Heart right ventricle (tissue), 16 donors: ENCODE measurements at regions of chr3 and their contacts with region 1.

Region 1: GRCh38 chr3:142279965-142280590 is 54.7 kb upstream of the GK5 start:
- DNase-seq: peak in 1 of 2 donors; percentile 54
- ATAC-seq: peak; percentile 81 to 95 (median 92)
- H3K4me3 ChIP-seq: no peak overlapping the region
- H3K27ac ChIP-seq: no peak overlapping the region
- H3K4me1 ChIP-seq: peaks cover 0 to 27% (median 0%) of the 10 kb centered on the region in 9 donors
- H3K27me3 ChIP-seq: no peaks in the 10 kb centered on the region
- CTCF ChIP-seq: peak; percentile 34 to 82 (median 73)

Region 2: GRCh38 chr3:141575879-141576743 is 704.0 kb before region 1 on chr3:
- intact Hi-C with region 1: loop called in 1 of 10 experiments (anchors 10 kb)
- DNase-seq: no peak
- ATAC-seq: peak in 4 of 8 donors; percentile 57 to 64 (median 60)
- H3K4me3 ChIP-seq: no peak overlapping the region
- H3K27ac ChIP-seq: peak overlapping the region in 1 of 10 donors; percentile 10
- H3K4me1 ChIP-seq: peaks cover 0 to 6% (median 0%) of the 10 kb centered on the region in 9 donors
- H3K27me3 ChIP-seq: no peaks in the 10 kb centered on the region
- CTCF ChIP-seq: peak in 8 of 9 donors; percentile 23 to 73 (median 60)

Region 3: GRCh38 chr3:141959921-141960554 is 320.0 kb before region 1 on chr3:
- intact Hi-C with region 1: loop called in 9 of 10 experiments (anchors 2 to 10 kb)
- DNase-seq: no peak
- ATAC-seq: peak in 4 of 8 donors; percentile 36 to 61 (median 44)
- H3K4me3 ChIP-seq: no peak overlapping the region
- H3K27ac ChIP-seq: peak overlapping the region in 7 of 10 donors; percentile 8 to 70 (median 43)
- H3K4me1 ChIP-seq: peaks cover 0 to 10% (median 0%) of the 10 kb centered on the region in 9 donors
- H3K27me3 ChIP-seq: no peaks in the 10 kb centered on the region
- CTCF ChIP-seq: no peak

Region 4: DNA sequence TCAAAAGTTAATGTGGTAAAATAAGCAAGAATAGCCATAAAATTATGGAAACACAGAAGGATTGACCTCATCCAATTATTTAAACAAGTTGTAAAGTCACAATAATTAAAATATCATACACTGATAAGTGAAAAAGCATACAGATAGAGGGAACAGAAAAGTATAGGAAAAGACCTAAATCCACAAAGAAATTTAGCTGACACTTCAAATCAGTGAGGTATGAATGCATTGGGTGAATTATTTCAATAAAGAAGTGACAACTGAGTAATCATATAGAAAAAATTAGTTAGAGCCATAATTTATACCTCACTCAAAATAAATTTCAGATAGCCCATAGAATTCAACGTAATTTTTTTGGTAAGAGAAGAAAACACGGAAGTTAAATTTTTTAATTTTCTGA is 155.8 kb before region 1 on chr3:
- intact Hi-C with region 1: loop called (anchors 2 to 10 kb)
- DNase-seq: no peak
- ATAC-seq: no peak
- H3K4me3 ChIP-seq: no peak overlapping the region
- H3K27ac ChIP-seq: no peak overlapping the region
- H3K4me1 ChIP-seq: no peaks in the 10 kb centered on the region
- H3K27me3 ChIP-seq: no peaks in the 10 kb centered on the region
- CTCF ChIP-seq: no peak

Region 5: DNA sequence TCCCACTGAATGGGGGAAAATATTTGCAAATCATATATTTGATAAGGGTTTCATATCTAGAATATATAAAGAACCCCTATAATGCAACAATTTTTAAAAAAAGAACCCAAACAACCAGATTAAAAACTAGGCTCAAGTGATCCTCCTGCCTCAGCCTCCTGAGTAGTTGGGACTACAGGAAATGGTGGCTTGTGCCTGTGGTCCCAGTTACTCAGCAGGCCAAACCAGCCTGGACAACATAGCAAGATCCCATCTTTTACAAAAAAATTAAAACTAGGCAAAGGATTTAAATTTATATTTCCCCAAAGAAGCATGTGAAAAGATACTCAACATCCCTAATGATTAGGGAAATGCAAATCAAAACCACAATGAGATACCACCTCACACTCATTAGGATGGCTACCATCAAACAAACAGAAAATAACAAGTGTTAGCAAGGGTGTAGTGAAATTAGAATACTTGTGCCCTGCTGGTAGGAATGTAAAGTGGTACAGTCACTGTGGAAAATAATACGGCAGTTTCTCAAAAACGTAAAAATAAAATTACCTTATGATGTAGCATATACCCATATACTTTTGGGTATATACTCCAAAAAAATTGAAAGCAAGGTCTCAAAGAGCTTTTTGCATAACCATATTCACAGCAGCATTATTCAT is 150.4 kb before region 1 on chr3:
- intact Hi-C with region 1: loop called (anchors 2 to 10 kb)
- DNase-seq: no peak
- ATAC-seq: no peak
- H3K4me3 ChIP-seq: no peak overlapping the region
- H3K27ac ChIP-seq: no peak overlapping the region
- H3K4me1 ChIP-seq: no peaks in the 10 kb centered on the region
- H3K27me3 ChIP-seq: no peaks in the 10 kb centered on the region
- CTCF ChIP-seq: no peak

Region 6: GRCh38 chr3:142175478-142175877 is 104.6 kb before region 1 on chr3:
- intact Hi-C with region 1: loop called in 7 of 10 experiments (anchors 1 to 10 kb)
- DNase-seq: no peak
- ATAC-seq: no peak
- H3K4me3 ChIP-seq: no peak overlapping the region
- H3K27ac ChIP-seq: no peak overlapping the region
- H3K4me1 ChIP-seq: no peaks in the 10 kb centered on the region
- H3K27me3 ChIP-seq: no peaks in the 10 kb centered on the region
- CTCF ChIP-seq: no peak

Region 7: DNA sequence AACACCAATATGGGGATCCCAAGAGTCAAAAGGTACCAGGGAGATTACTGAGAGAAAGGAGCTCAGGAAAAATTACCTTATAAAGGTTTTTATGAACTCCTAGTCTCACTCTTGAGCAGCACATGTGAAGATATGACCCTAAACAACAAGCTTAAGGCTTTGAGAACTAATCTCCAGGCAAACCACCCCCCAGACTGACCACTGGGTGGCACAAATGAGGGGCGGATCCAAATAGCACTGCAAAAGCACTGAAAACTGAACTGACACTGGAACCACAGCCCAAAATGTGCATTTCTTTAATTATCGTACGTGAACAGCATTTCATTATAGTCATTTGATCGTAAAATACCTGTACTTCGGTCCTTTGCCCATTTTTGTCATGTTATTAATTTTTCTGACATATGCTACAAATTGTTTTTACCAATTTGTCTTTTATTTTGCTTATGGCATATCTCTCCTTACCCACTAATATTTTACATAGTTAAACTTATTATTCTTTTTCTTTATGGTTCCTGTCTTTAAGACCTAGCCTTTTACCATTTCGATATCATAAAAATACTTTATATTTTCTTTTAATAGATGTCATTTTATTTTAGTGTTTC is 99.2 kb before region 1 on chr3:
- intact Hi-C with region 1: loop called in 7 of 10 experiments (anchors 1 to 10 kb)
- DNase-seq: peak; percentile 13 to 15
- ATAC-seq: peak in 1 of 8 donors; percentile 47
- H3K4me3 ChIP-seq: no peak overlapping the region
- H3K27ac ChIP-seq: no peak overlapping the region
- H3K4me1 ChIP-seq: no peaks in the 10 kb centered on the region
- H3K27me3 ChIP-seq: no peaks in the 10 kb centered on the region
- CTCF ChIP-seq: peak in 8 of 9 donors; percentile 10 to 63 (median 52)

Region 8: GRCh38 chr3:142433110-142433509 is 153.0 kb after region 1 on chr3:
- intact Hi-C with region 1: no loop called
- DNase-seq: no peak
- ATAC-seq: no peak
- H3K4me3 ChIP-seq: no peak overlapping the region
- H3K27ac ChIP-seq: peak overlapping the region in 1 of 10 donors; percentile 11
- H3K4me1 ChIP-seq: peaks cover 0 to 19% (median 11%) of the 10 kb centered on the region in 9 donors
- H3K27me3 ChIP-seq: no peaks in the 10 kb centered on the region
- CTCF ChIP-seq: no peak

Region 9: GRCh38 chr3:142501004-142501926 is 221.2 kb after region 1 on chr3:
- intact Hi-C with region 1: no loop called
- DNase-seq: no peak
- ATAC-seq: no peak
- H3K4me3 ChIP-seq: no peak overlapping the region
- H3K27ac ChIP-seq: no peak overlapping the region
- H3K4me1 ChIP-seq: no peaks in the 10 kb centered on the region
- H3K27me3 ChIP-seq: no peaks in the 10 kb centered on the region
- CTCF ChIP-seq: no peak